Right cardiac atrium (tissue), 5 donors: ENCODE measurements at regions of chr2 and their contacts with region 1.

Region 1: GRCh38 chr2:102141970-102142828 is at the start of gene IL1R1:
- DNase-seq: peak; percentile 92 to 96 (median 95)
- ATAC-seq: peak; percentile 94 to 95
- H3K4me3 ChIP-seq: peak within 1 kb of the TSS; percentile 49
- H3K27ac ChIP-seq: peak within 1 kb of the TSS; percentile 70
- H3K4me1 ChIP-seq: peaks cover 7% of the 10 kb centered on the region
- H3K27me3 ChIP-seq: no peaks in the 10 kb centered on the region
- total RNA-seq, gene IL1R1: 43.2 to 111 (median 60.7) TPM

Region 2: GRCh38 chr2:102070058-102070642 is 72.0 kb before region 1 on chr2:
- intact Hi-C with region 1: loop called in 1 of 4 experiments (anchors 10 kb)
- DNase-seq: peak; percentile 95 to 97 (median 97)
- ATAC-seq: peak; percentile 96
- H3K4me3 ChIP-seq: no peak overlapping the region
- H3K27ac ChIP-seq: peak overlapping the region; percentile 88
- H3K4me1 ChIP-seq: peaks cover 11% of the 10 kb centered on the region
- H3K27me3 ChIP-seq: no peaks in the 10 kb centered on the region

Region 3: DNA sequence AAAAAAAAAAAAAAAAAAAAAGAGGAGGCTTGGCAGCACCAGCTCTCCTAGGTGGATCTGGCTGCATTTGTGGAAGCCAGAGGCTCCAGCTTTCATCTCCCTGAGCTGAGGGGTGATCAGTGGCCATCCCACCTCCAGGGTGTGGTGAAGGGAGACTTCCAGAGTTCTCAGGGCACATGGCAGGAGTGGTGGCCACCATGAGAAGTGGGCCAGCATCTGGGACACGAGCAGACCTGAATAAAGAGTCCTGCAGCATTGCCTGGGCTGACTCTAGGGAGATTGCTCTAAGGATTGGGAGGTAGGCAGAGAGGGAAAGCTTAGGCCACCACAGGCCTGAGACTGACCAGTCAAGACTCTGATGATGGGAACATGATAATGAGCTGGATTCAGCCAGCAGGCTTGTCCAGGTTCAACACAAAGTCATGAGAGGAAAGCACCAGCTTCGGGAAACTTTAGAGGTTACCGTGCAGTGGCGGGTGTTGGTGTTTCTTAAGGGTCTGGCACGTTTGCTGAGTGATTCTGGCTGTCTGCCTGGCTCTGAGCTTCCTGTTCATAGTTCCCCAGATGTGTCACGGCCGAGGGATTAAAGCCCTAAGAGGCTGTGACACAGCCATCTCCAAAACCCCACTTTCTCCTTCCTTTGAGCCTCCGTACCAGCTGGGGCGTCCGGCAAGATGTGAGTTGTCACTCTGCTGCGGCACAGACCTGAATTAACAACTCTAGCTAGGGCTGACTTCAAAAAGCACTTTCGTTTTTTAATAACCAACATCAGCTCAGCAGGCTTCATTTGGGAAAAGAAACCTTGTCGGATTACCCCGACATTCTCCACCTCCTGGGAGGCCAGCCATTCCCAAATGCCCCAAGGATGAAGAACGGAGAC is 38.0 kb before region 1 on chr2:
- intact Hi-C with region 1: loop called in 1 of 4 experiments (anchors 5 kb)
- DNase-seq: peak; percentile 80 to 89 (median 84)
- ATAC-seq: peak; percentile 82 to 88
- H3K4me3 ChIP-seq: peak overlapping the region; percentile 77
- H3K27ac ChIP-seq: peak overlapping the region; percentile 73
- H3K4me1 ChIP-seq: peaks cover 5% of the 10 kb centered on the region
- H3K27me3 ChIP-seq: no peaks in the 10 kb centered on the region

Region 4: GRCh38 chr2:102686479-102687439 is 544.6 kb after region 1 on chr2:
- intact Hi-C with region 1: no loop called
- DNase-seq: no peak
- ATAC-seq: no peak
- H3K4me3 ChIP-seq: no peak overlapping the region
- H3K27ac ChIP-seq: no peak overlapping the region
- H3K4me1 ChIP-seq: no peaks in the 10 kb centered on the region
- H3K27me3 ChIP-seq: no peaks in the 10 kb centered on the region